Ascending aorta (tissue), 2 donors: ENCODE measurements at regions of chr2 and their contacts with region 1.

Region 1: DNA sequence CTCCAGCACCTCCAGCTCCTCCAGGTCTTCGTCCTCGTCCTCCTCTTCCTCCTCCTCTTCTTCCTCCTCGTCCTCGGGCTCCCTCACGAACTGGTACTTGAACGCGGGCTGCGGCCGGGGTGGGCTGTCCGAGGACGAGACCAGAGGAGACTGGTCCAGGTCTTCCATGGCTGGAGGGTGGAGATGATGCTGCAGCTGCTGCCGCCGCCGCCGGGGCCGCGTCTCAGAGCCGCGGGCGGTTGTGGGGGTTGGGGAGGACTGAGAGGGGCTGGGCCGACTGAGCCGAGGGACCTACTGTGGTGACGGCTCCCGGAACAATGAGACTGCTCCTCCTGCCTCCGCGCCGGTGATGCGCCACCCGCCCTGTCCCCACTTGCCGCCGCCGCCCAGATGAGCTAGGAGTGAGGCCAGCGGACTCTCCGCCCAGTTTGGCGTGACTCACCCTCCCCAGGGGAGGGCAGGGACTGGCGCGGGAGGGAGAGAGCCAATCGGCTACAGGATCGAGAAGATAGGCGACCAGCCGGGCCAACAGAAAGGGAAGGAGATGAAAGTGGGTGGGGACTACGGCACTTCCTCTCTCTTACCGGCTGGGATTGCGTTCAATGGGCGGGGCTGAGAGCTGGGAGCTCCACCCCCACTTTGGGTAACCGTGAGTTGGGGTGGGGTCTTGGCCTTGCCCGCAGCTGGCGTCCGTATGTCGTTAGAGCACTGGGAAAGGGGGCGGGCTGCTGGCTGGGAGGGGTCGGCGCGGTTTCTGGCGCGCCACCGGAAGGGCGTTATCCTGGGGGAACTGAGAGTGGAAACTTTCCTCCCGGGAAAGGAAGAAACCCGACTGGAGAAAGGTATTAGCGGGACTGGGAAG is at the start of gene RTN4:
- DNase-seq: peak; percentile 98 to 99
- H3K4me3 ChIP-seq: peak within 1 kb of the TSS; percentile 79 to 90
- H3K27ac ChIP-seq: peak within 1 kb of the TSS; percentile 95 to 96
- H3K4me1 ChIP-seq: peaks cover 2 to 17% of the 10 kb centered on the region in 2 donors
- H3K27me3 ChIP-seq: no peaks in the 10 kb centered on the region
- CTCF ChIP-seq: no peak
- total RNA-seq, gene RTN4: 296 TPM

Region 2: GRCh38 chr2:53970724-53971602 is 1079.4 kb before region 1 on chr2 and contains the start of gene PSME4:
- intact Hi-C with region 1: loop called (anchors 2 kb)
- DNase-seq: peak; percentile 77 to 97
- H3K4me3 ChIP-seq: peak within 1 kb of the TSS; percentile 90 to 92
- H3K27ac ChIP-seq: peak within 1 kb of the TSS; percentile 96 to 97
- H3K4me1 ChIP-seq: peaks cover 3 to 15% of the 10 kb centered on the region in 2 donors
- H3K27me3 ChIP-seq: no peaks in the 10 kb centered on the region
- CTCF ChIP-seq: no peak
- total RNA-seq, gene PSME4: 14.9 TPM

Region 3: DNA sequence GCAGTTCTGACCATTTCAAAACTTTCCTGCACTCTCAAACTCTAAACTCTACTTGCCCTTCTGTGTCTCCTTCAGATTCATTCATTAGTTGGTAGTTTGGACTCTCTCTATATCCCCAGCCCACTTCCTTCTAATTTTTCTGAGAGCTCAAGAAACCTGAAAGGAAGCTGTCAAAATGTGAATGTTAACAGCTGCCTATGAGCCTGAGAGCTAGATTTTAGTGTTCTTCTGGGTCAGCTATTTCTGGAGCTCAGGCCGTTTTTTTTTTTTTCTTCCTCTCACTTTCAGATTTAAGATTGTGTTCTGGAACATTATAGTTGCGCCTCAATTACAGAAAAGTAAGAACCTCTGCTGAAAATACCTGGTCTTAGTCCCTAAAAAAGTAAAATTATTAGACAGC is 73.2 kb before region 1 on chr2:
- intact Hi-C with region 1: loop called (anchors 5 kb)
- DNase-seq: no peak
- H3K4me3 ChIP-seq: no peak overlapping the region
- H3K27ac ChIP-seq: peak overlapping the region in 1 of 2 donors; percentile 74
- H3K4me1 ChIP-seq: peaks cover 8 to 37% of the 10 kb centered on the region in 2 donors
- H3K27me3 ChIP-seq: no peaks in the 10 kb centered on the region
- CTCF ChIP-seq: no peak

Region 4: DNA sequence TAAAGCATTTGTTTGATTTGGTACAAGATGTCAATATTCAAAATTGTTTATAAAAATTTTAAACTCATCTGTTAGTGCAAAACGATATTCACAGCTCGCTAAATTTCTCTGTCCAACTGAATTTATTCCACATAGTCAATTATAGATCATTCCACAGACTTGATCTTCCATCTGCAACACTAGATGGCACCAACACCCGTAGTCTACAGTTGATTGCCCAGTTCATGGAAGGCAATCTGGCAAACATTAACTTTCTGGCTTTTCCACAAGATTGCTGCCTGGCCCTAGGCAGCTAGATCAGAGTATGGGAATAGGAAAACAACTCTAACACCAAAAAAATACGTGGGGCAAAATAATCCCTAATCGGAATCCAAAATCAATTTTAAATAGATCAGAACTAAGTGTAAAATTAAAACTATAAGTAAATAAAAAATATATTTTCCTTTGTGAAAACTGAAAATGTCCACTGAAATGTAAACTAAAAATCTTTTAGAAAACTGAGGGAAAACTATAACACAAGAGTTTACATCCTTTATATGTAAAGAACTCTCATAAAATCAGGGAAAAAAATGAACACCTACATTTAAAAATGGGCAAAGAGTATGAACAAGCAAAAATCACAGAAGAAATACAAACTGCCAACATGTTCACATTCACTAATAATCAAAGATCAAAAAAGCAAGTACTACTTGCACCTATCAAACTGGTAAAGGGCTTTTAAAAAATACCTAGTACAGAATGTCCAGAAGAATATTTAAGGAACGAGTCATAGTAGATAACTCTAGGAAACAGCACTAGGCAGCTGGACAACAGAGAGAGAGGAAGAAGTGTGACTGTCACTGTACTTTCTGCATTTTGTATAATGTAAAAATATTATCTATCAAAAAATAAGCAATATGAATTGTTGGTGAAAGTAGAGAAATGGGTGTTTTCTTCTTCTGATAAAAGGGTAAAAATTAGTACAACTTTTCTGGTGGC is 35.1 kb before region 1 on chr2:
- intact Hi-C with region 1: loop called (anchors 2 kb)
- DNase-seq: peak in 1 of 2 donors; percentile 71
- H3K4me3 ChIP-seq: no peak overlapping the region
- H3K27ac ChIP-seq: no peak overlapping the region
- H3K4me1 ChIP-seq: peaks cover 2 to 41% of the 10 kb centered on the region in 2 donors
- H3K27me3 ChIP-seq: no peaks in the 10 kb centered on the region
- CTCF ChIP-seq: peak; percentile 42 to 78 (median 49)

Region 5: GRCh38 chr2:55168221-55169154 is 118.1 kb after region 1 on chr2:
- intact Hi-C with region 1: loop called (anchors 1 kb)
- DNase-seq: peak in 1 of 2 donors; percentile 83
- H3K4me3 ChIP-seq: no peak overlapping the region
- H3K27ac ChIP-seq: peak overlapping the region; percentile 73
- H3K4me1 ChIP-seq: peaks cover 0 to 36% of the 10 kb centered on the region in 2 donors
- H3K27me3 ChIP-seq: no peaks in the 10 kb centered on the region
- CTCF ChIP-seq: peak; percentile 63 to 73 (median 71)

Region 6: DNA sequence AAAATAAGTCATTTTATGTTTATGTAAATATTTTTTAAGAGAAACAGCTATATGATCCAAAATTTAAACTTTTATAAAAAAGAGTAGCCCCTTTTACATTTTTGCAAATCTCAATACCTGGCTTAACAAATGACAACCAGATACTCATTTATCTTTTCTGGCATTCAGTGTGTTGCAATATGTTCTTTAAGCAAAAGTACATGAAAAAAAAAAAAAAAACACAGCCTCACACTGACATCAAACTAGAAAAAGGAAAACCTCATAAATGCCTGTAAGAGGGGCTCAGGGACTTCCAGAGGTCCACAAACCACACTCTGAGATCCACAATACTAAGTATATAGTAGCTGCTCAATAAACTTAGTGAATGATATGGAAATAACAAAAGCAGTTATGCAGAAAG is 545.2 kb after region 1 on chr2:
- intact Hi-C with region 1: no loop called
- DNase-seq: no peak
- H3K4me3 ChIP-seq: no peak overlapping the region
- H3K27ac ChIP-seq: no peak overlapping the region
- H3K4me1 ChIP-seq: peaks cover 0 to 4% of the 10 kb centered on the region in 2 donors
- H3K27me3 ChIP-seq: no peaks in the 10 kb centered on the region
- CTCF ChIP-seq: no peak